Caco-2 (cell line): ENCODE measurements at regions of chr2 and their contacts with region 1.

Region 1: DNA sequence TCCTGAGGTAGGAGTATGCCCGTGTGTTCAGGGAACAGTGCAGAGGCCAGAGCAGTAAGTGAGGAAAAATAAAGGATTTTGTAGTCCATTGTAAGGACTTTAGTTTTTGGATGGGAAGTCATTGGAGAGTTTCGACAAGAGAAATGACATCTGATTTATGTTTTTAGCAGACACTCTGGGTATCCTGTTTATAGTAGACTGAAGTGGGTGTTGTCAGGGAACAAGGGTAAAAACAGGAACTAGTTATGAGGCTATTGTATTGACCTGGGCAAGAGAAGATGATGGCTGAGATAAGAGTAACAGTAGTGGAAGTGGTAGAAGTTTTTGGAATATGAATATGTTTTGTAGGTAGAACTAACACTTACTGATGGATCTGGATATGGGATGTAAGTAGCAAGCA is 59.8 kb downstream of the GTF2A1L start:
- DNase-seq: no peak
- H3K4me3 ChIP-seq: no peak overlapping the region
- H3K4me3 Mint-ChIP-seq: no peak overlapping the region
- H3K27ac Mint-ChIP-seq: no peak overlapping the region
- H3K4me1 ChIP-seq: peaks cover 18% of the 10 kb centered on the region
- H3K4me1 Mint-ChIP-seq: peaks cover 10% of the 10 kb centered on the region
- H3K27me3 ChIP-seq: no peaks in the 10 kb centered on the region
- H3K27me3 Mint-ChIP-seq: no peaks in the 10 kb centered on the region
- CTCF ChIP-seq: no peak

Region 2: DNA sequence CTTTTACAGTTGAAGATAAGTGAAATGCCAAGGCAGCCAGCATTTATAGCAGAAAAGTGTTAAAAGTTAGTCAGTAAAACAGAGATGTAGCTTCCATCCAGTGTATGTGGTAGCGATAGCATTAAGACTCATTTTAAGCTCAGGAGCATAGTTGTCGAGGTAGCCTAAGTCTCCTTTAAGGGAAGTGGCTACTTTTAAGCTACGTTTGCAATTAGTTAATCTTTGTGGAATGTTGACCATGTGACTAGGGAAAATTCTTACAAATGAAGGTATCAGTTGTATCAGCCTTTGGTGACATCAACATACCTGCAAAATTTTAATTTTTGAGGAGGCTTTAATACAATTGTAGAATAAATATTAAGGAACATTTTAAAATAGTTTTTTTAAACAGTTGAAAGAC is 16.2 kb after region 1 on chr2:
- CTCF ChIA-PET with region 1: no interaction called
- POLR2A ChIA-PET with region 1: no interaction called
- intact Hi-C with region 1: loop called (anchors 2 kb)
- DNase-seq: peak in 1 of 2 experiments; percentile 10
- H3K4me3 ChIP-seq: no peak overlapping the region
- H3K4me3 Mint-ChIP-seq: no peak overlapping the region
- H3K27ac Mint-ChIP-seq: peak overlapping the region; percentile 56
- H3K4me1 ChIP-seq: peaks cover 26% of the 10 kb centered on the region
- H3K4me1 Mint-ChIP-seq: no peaks in the 10 kb centered on the region
- H3K27me3 ChIP-seq: no peaks in the 10 kb centered on the region
- H3K27me3 Mint-ChIP-seq: no peaks in the 10 kb centered on the region
- CTCF ChIP-seq: no peak

Region 3: DNA sequence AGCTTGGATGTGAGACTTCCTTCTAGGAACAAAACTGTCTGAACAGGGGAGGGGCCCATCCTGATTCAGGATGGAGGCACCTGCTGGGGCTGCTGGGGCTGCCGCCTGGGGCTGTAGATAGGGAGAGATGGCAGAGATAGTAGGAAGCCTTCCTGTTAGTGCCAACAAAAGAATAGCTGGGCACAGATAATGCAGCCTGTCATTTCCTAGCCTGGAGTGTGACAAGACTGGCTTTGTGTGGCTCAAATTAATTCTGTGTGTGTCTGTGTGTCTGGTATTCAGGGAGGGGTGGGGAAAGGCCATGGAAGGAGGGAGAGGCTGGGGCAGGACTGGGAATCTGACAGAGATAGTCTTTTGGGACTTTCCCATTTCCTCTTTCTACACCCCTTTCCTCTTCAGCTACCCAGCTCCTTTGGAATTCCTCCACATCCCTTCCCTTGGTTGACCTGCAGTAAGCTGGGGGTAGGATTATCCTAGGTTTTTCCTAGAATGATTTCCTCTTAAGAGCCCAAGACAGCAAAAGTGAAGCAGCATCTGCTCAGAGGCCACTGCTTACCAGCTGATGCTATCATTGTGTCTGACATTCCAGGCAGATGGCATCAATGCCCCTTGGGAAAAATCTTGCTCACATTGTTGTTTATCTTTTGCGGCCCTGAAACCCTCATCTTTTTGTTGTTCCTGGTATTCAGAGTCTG is 223.0 kb after region 1 on chr2:
- CTCF ChIA-PET with region 1: no interaction called
- POLR2A ChIA-PET with region 1: no interaction called
- intact Hi-C with region 1: no loop called
- DNase-seq: no peak
- H3K4me3 ChIP-seq: no peak overlapping the region
- H3K4me3 Mint-ChIP-seq: no peak overlapping the region
- H3K27ac Mint-ChIP-seq: no peak overlapping the region
- H3K4me1 ChIP-seq: no peaks in the 10 kb centered on the region
- H3K4me1 Mint-ChIP-seq: no peaks in the 10 kb centered on the region
- H3K27me3 ChIP-seq: no peaks in the 10 kb centered on the region
- H3K27me3 Mint-ChIP-seq: peaks cover 15% of the 10 kb centered on the region
- CTCF ChIP-seq: no peak